Sigmoid colon (tissue), 7 donors: ENCODE measurements at regions of chr14 and their contacts with region 1.

Region 1: DNA sequence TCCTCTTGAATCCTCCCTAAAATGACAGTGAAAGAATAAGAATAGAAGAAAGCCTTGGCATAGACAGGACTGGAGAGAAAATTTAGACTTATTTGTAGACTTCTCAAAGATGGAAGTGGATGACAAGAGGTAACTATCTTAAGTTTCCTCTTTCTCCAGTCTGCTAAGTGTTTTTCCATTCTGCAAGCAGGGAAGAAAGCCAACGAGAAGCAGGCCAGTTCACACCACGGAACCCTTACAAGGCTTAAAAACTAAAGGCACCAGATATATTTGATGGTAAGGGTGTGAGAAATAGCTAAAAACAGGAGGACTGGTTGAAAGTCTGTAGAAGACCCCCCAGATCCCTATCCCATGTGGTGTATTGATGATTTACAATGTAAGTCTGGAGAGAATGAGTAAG is 82.9 kb upstream of the GPHB5 start:
- DNase-seq: no peak
- H3K4me3 ChIP-seq: no peak overlapping the region
- H3K27ac ChIP-seq: peak overlapping the region in 2 of 4 donors; percentile 55 to 64
- H3K4me1 ChIP-seq: peaks cover 0 to 56% (median 45%) of the 10 kb centered on the region in 4 donors
- H3K27me3 ChIP-seq: no peaks in the 10 kb centered on the region
- CTCF ChIP-seq: no peak
- EP300 ChIP-seq: no peak
- POLR2A ChIP-seq: no peak

Region 2: DNA sequence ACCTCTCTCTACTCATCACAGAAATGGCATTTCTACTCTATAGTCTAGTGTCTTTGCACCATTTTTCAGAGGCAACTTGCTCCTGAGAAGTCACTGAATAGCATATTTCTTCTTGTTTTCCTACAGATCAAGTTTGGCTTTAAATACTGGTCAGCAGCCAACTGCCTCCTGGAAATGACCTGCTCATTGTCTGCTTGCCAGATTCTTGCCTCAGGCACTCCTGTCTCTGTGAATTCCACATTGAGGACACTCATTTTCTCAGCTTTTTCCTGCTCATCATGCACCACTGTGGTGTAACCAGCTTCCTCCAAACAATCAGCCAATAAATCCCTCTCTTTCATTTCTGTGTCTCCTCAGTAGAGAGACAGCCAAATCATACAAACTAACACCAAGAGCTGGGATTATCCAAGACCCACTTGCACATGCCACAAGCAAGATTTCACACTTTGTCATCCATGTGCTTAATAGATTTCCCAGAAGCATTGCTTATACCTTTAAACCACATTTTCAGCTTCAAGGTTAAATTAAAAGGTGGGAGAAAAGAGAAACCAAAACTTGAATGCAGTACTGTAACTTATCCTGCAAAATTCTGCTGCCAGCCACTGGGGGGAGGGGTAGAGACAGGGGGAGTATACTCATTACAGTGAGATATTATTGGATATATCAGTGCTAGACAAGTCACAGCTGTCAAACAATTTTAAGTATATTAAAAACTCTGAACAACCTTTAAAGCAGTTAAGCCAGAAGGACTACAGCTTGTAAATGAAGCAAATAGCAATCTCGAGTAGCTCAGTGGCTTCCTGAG is 36.5 kb after region 1 on chr14:
- intact Hi-C with region 1: loop called (anchors 5 kb)
- DNase-seq: peak; percentile 85
- H3K4me3 ChIP-seq: peak overlapping the region in 1 of 4 donors; percentile 30
- H3K27ac ChIP-seq: peak overlapping the region; percentile 69 to 81 (median 79)
- H3K4me1 ChIP-seq: peaks cover 0 to 71% (median 55%) of the 10 kb centered on the region in 4 donors
- H3K27me3 ChIP-seq: no peaks in the 10 kb centered on the region
- CTCF ChIP-seq: peak in 3 of 4 experiments; percentile 12 to 14 (median 12)
- EP300 ChIP-seq: peak in 2 of 4 donors; percentile 8 to 30
- POLR2A ChIP-seq: no peak

Region 3: DNA sequence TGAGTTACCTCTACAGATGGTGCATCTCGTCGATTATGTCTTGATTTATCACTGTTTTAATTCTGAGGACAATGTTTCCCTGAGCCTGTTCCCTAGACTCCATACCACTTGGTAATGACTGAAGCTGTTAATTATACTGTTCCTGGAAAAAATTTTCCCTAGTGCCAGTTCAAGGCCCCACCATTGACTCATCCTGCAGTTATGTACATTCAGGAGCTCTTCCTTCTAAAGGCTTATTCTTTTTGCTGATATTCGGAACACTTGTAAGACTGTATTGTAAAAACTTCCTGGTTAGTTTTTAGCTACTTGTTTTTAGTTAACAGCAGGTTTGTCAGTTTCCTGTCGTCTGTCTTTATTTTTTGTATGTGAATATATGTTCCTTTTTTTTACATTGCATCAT is 171.9 kb after region 1 on chr14:
- intact Hi-C with region 1: no loop called
- DNase-seq: no peak
- H3K4me3 ChIP-seq: no peak overlapping the region
- H3K27ac ChIP-seq: no peak overlapping the region
- H3K4me1 ChIP-seq: no peaks in the 10 kb centered on the region
- H3K27me3 ChIP-seq: no peaks in the 10 kb centered on the region
- CTCF ChIP-seq: no peak
- EP300 ChIP-seq: no peak
- POLR2A ChIP-seq: no peak

Region 4: DNA sequence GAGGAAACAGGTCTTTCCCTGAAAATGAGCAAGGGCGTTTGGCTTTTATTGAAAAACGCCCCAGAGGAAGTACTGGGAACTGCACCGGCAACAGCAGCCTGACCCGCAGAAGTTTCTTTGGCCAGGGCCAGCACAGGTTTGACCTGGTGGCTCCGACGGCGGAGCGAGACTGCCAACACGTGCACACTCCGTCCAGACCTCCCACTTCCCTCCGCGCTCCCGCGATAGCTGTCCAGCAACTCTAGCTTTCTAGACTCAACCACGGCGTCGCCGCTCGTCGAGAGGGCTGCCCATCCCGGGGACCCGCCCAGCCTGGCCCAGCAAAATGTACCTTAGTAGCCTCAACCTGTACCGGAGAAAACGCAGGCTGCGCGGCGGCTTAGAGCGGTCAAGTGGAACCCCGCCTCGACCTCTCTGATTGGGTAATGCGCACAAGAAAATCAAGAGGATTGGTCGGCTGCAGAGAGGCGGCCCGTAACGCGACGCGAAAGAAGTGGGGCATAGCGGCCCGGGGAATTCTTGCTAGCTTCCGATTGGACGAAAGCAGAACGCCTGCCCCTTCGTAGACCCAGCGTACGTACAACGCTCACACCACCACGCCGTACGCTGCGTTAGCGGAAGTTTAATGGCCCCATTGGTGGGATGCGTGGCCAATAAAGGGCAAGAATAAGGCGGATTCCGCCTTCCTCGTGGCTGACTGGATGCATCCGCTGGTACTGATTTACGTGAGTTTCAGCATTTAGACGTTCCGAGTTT is 240.0 kb after region 1 on chr14 and contains the start of gene WDR89:
- intact Hi-C with region 1: loop called (anchors 5 kb)
- DNase-seq: peak; percentile 99
- H3K4me3 ChIP-seq: peak within 1 kb of the TSS; percentile 42 to 69 (median 54)
- H3K27ac ChIP-seq: peak within 1 kb of the TSS; percentile 84 to 95 (median 89)
- H3K4me1 ChIP-seq: peaks cover 0 to 12% (median 6%) of the 10 kb centered on the region in 4 donors
- H3K27me3 ChIP-seq: no peaks in the 10 kb centered on the region
- CTCF ChIP-seq: peak; percentile 45 to 85 (median 75)
- EP300 ChIP-seq: peak in 1 of 4 donors; percentile 10
- POLR2A ChIP-seq: peak in 1 of 2 donors; percentile 46
- total RNA-seq, gene WDR89: 5.0 to 10.0 (median 7.9) TPM